Right lobe of liver (tissue), 6 donors: ENCODE measurements at regions of chr3 and their contacts with region 1.

Region 1: GRCh38 chr3:179318876-179319275 is 4.0 kb upstream of the ZNF639 start:
- DNase-seq: no peak
- ATAC-seq: no peak
- H3K4me3 ChIP-seq: no peak overlapping the region
- H3K27ac ChIP-seq: no peak overlapping the region
- H3K4me1 ChIP-seq: peaks cover 0 to 10% (median under 1%) of the 10 kb centered on the region in 4 donors
- H3K27me3 ChIP-seq: no peaks in the 10 kb centered on the region
- CTCF ChIP-seq: no peak
- POLR2A ChIP-seq: no peak

Region 2: DNA sequence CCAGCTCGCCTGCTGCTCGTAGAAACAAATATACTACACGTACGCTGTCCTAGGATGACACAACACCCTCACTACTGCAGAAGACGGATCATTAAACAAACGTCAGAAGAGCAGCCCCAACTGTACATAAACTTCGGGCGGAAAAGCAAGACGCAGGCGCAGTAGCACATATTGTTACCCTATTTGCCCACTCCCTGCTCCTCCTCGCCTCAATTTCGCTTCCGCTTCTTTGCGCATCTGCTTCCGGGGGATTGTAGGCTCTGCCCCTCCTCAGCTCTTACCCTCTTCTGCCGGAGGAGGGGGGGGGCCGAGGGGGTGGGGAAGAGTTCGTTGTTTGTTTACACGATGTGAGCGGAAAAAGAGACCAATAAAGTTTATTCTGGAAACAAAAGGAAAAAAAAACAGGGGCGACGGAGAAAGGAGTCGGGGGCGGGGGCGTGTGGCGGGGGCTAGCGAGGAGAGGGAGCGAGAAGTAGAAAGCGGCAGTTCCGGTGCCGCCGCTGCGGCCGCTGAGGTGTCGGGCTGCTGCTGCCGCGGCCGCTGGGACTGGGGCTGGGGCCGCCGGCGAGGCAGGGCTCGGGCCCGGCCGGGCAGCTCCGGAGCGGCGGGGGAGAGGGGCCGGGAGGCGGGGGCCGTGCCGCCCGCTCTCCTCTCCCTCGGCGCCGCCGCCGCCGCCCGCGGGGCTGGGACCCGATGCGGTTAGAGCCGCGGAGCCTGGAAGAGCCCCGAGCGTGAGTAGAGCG is 170.8 kb before region 1 on chr3 and contains the start of gene PIK3CA:
- intact Hi-C with region 1: loop called in 1 of 2 experiments (anchors 5 kb)
- DNase-seq: peak; percentile 92 to 97 (median 97)
- ATAC-seq: peak; percentile 92 to 97 (median 94)
- H3K4me3 ChIP-seq: peak within 1 kb of the TSS; percentile 72 to 90 (median 89)
- H3K27ac ChIP-seq: peak within 1 kb of the TSS; percentile 93 to 98 (median 96)
- H3K4me1 ChIP-seq: peaks cover 0 to 6% (median 0%) of the 10 kb centered on the region in 4 donors
- H3K27me3 ChIP-seq: no peaks in the 10 kb centered on the region
- CTCF ChIP-seq: no peak
- POLR2A ChIP-seq: peak; percentile 72
- total RNA-seq, gene PIK3CA: 6.5 to 13.1 (median 11.2) TPM